ENCODE measurements at regions of chr4 and their contacts with region 1.

Region 1: DNA sequence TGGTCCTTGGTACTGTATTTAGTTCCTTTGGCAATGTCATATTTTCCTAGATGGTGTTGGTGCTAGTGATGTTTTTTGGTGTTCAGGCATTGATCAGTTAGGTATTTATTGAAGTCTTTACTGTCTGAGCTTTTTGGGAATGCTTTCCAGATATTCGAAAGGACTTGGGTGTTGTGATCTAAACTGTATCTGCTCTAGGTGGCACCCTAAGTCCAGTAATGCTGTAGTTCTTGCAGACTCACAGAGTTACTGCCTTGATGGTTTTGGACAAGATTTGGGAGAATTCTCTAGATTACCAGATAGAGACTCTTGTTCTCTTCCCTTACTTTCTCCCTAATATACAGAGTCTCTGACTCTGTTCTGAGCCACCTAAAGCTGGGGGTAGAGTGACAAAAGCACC is 513.6 kb upstream of the PITX2 start:
- DNase-seq: peak; percentile 59
- ATAC-seq: peak; percentile 73
- H3K4me3 ChIP-seq: no peak overlapping the region
- H3K27ac ChIP-seq: no peak overlapping the region
- H3K4me1 ChIP-seq: no peaks in the 10 kb centered on the region
- H3K27me3 ChIP-seq: no peaks in the 10 kb centered on the region
- CTCF ChIP-seq: peak; percentile 60
- POLR2A ChIP-seq: no peak
- RAD21 ChIP-seq: peak; percentile 75

Region 2: DNA sequence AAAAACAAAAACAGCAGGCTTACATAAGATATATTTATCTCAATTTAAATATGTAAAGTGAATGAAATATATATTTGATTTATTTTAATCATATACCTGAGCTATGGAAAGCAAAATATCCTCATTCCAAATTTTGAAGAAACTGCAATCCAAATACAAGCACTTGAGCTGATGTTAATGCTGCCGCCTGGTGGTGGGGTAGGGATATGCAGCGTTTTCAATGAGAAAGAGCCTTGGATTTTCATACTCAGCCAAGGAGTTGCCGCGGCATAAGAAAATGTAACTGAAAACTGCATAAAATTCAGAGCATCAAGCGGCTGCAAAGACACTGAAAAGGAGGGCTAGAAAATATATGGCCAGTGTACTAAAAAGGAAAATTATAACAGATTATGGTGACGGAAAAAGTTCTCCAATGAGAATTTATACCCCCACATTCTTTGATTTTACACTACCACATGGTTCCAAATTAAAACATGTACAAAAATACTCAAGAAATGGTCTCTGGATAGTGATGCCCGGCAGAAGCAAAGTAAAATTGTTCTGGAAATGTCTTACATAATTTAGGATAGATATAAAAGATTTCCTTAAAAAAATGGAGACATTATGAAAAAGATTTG is 146.7 kb after region 1 on chr4:
- CTCF ChIA-PET with region 1: no interaction called
- POLR2A ChIA-PET with region 1: no interaction called
- dilution Hi-C with region 1: no loop called
- in situ Hi-C with region 1: no loop called
- intact Hi-C with region 1: loop called (anchors 2 kb)
- DNase-seq: peak; percentile 57
- ATAC-seq: 0 out of 2 replicates have a peak, but pooled peaks have one; percentile 44
- H3K4me3 ChIP-seq: no peak overlapping the region
- H3K27ac ChIP-seq: no peak overlapping the region
- H3K4me1 ChIP-seq: no peaks in the 10 kb centered on the region
- H3K27me3 ChIP-seq: no peaks in the 10 kb centered on the region
- CTCF ChIP-seq: peak; percentile 70
- POLR2A ChIP-seq: no peak
- RAD21 ChIP-seq: peak; percentile 60

Region 3: DNA sequence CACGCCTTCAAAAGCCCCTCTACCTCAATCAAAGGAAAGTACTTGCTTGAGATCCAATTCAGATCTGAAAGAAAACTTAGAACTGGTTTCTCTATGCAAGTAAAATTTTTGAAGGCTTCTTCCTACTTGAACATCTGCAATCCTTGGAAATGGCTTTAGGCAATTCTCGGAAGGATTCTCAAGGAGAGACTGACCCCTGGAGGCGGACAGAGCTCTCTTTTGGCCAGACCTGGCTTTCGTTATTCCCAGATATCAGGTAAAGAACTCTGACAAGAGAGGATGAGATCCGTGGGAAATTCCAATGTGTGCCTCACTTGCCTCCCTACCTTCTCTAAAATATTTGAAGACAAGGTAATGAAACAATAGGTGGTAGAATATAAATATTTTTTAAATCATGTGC is 338.6 kb after region 1 on chr4:
- CTCF ChIA-PET with region 1: no interaction called
- POLR2A ChIA-PET with region 1: no interaction called
- dilution Hi-C with region 1: no loop called
- in situ Hi-C with region 1: no loop called
- intact Hi-C with region 1: loop called (anchors 2 kb)
- DNase-seq: peak; percentile 39
- ATAC-seq: no peak
- H3K4me3 ChIP-seq: no peak overlapping the region
- H3K27ac ChIP-seq: no peak overlapping the region
- H3K4me1 ChIP-seq: no peaks in the 10 kb centered on the region
- H3K27me3 ChIP-seq: no peaks in the 10 kb centered on the region
- CTCF ChIP-seq: peak; percentile 38
- POLR2A ChIP-seq: no peak
- RAD21 ChIP-seq: peak; percentile 53